ENCODE measurements at regions of chr3 and their contacts with region 1.

Region 1: GRCh38 chr3:106609666-106610301 is 741.0 kb upstream of the CBLB start:
- DNase-seq: peak; percentile 78
- ATAC-seq: peak; percentile 81
- H3K4me3 Mint-ChIP-seq: no peak overlapping the region
- H3K27ac Mint-ChIP-seq: peak overlapping the region; percentile 81
- H3K4me1 Mint-ChIP-seq: peaks cover 29% of the 10 kb centered on the region
- H3K27me3 Mint-ChIP-seq: peaks cover 4% of the 10 kb centered on the region

Region 2: GRCh38 chr3:105676621-105677300 is 933.0 kb before region 1 on chr3:
- CTCF ChIA-PET with region 1: no interaction called
- POLR2A ChIA-PET with region 1: no interaction called
- intact Hi-C with region 1: loop called in 1 of 2 experiments (anchors 5 kb)
- DNase-seq: peak; percentile 74
- ATAC-seq: peak; percentile 94
- H3K4me3 Mint-ChIP-seq: peak overlapping the region; percentile 27
- H3K27ac Mint-ChIP-seq: peak overlapping the region; percentile 87
- H3K4me1 Mint-ChIP-seq: peaks cover 27% of the 10 kb centered on the region
- H3K27me3 Mint-ChIP-seq: no peaks in the 10 kb centered on the region

Region 3: DNA sequence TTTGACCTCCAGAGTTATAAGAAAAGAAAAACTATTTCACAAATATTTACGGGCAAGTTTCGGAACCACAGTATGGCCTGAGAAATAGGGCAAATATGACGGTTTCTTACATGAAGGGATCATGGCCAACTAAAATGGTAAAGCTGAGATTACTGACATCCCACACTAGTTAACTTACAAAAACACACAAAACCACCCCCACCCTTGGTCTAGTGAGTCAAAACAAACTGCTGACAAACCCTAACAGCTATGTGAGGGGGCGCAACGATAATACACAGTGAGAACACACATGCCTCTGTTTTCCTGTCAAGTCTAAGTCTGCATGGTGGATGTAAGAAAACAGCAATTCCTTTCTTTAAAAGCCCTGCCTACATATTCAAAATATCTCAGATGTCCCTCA is 773.3 kb before region 1 on chr3:
- CTCF ChIA-PET with region 1: no interaction called
- POLR2A ChIA-PET with region 1: no interaction called
- intact Hi-C with region 1: loop called in 1 of 2 experiments (anchors 10 kb)
- DNase-seq: peak; percentile 73
- ATAC-seq: peak; percentile 68
- H3K4me3 Mint-ChIP-seq: peak overlapping the region; percentile 15
- H3K27ac Mint-ChIP-seq: peak overlapping the region; percentile 81
- H3K4me1 Mint-ChIP-seq: peaks cover 80% of the 10 kb centered on the region
- H3K27me3 Mint-ChIP-seq: no peaks in the 10 kb centered on the region

Region 4: DNA sequence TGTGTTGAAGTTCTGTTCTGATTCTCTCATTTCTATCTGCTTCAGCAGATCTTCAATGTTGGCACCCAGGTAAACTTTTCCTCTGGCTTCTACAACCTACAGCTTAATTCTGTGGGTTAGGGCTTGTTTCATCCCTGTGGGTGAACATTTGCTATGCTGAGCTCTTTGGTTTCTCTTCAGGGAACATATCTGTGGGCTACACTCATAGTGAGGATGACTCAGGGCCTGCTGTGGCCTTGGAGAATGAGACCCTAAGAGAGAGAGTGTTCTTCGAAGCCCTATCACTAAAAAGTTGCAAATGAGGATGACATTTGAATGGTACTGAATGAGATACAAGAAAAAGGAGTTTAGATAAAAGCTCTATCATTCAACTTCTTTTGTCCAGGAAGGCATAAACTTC is 394.7 kb before region 1 on chr3:
- CTCF ChIA-PET with region 1: interaction called, 4 read pairs
- POLR2A ChIA-PET with region 1: no interaction called
- intact Hi-C with region 1: loop called (anchors 2 to 10 kb)
- DNase-seq: peak; percentile 62
- ATAC-seq: peak; percentile 91
- H3K4me3 Mint-ChIP-seq: no peak overlapping the region
- H3K27ac Mint-ChIP-seq: peak overlapping the region; percentile 73
- H3K4me1 Mint-ChIP-seq: peaks cover 59% of the 10 kb centered on the region
- H3K27me3 Mint-ChIP-seq: no peaks in the 10 kb centered on the region

Region 5: GRCh38 chr3:106473576-106474475 is 136.0 kb before region 1 on chr3:
- CTCF ChIA-PET with region 1: interaction called, 3 read pairs
- POLR2A ChIA-PET with region 1: interaction called, 3 read pairs
- intact Hi-C with region 1: loop called (anchors 2 kb)
- DNase-seq: peak; percentile 47
- ATAC-seq: peak; percentile 86
- H3K4me3 Mint-ChIP-seq: no peak overlapping the region
- H3K27ac Mint-ChIP-seq: peak overlapping the region; percentile 88
- H3K4me1 Mint-ChIP-seq: peaks cover 28% of the 10 kb centered on the region
- H3K27me3 Mint-ChIP-seq: no peaks in the 10 kb centered on the region

Region 6: DNA sequence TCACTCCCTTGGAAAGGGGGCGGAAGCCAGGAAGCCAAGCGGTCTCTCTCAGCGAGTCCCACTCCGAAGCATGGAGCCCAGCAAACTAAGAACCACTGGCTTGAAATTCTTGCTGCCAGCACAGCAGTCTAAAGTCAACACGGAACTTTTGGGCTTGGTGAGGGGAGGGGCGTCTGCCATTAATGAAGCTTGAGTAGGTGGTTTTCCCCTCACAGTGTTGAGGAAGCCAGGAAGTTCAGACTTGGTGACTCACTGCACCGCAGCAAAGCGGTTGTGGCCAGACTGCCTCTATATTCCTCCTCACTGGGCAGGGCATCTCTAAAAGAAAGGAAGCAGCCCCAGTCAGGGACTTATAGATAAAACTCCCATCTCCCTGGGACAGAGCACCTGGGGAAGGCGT is 75.6 kb before region 1 on chr3:
- CTCF ChIA-PET with region 1: no interaction called
- POLR2A ChIA-PET with region 1: no interaction called
- intact Hi-C with region 1: loop called in 1 of 2 experiments (anchors 5 kb)
- DNase-seq: peak; percentile 74
- ATAC-seq: peak; percentile 93
- H3K4me3 Mint-ChIP-seq: no peak overlapping the region
- H3K27ac Mint-ChIP-seq: peak overlapping the region; percentile 30
- H3K4me1 Mint-ChIP-seq: peaks cover 26% of the 10 kb centered on the region
- H3K27me3 Mint-ChIP-seq: peaks cover 2% of the 10 kb centered on the region

Measured in activated CD4-positive, alpha-beta T cell treated with anti-CD3 and anti-CD28 coated beads for 36 hours (primary cell).